ENCODE measurements at regions of chr19 and their contacts with region 1.

Region 1: DNA sequence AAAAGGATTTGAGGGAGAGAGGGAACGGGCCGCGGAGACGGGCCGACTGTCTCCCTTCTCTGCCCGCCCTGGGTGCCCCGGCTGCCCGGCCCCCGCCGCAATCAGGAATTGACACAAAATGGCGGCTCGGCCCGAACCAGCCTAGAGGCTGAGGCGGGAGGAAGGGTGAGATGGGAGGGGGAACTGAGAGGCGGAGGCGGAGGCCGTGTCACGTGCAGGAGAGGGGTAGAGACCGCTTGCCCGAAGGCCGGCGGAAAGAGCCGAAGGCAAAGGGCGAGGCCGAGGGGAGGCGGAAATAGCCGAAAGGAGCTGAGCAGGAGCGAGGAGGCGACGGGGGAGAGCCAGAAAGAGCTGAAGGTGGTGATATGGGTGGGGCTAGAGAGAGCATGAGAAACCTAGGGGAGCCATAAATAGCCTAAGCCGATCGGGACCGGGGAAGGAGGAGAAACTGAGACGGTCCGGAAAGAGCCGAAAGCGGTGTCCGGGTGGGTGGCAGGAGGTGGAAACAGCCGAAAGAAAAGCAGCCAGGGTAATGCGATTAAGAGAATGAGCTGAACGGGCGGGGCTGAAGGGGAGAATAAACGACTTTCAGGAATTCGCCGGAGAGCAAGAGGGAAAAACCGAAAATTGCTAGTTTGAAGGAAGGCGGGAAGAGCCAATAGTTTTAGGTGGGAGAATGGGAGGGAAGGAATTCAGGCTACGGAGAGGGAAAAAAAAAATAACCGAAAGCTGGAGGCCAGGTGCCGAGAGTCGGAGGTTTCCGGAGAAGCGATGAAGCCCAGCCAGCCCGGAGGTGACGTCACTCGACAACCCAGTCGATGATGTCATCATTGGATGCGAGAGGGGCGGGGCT is at the start of gene ZC3H4:
- DNase-seq: peak; percentile 100
- H3K4me3 Mint-ChIP-seq: peak within 1 kb of the TSS; percentile 94
- H3K27ac Mint-ChIP-seq: peak within 1 kb of the TSS; percentile 100
- H3K4me1 Mint-ChIP-seq: peaks cover 33% of the 10 kb centered on the region
- H3K27me3 Mint-ChIP-seq: peaks cover 9% of the 10 kb centered on the region

Region 2: DNA sequence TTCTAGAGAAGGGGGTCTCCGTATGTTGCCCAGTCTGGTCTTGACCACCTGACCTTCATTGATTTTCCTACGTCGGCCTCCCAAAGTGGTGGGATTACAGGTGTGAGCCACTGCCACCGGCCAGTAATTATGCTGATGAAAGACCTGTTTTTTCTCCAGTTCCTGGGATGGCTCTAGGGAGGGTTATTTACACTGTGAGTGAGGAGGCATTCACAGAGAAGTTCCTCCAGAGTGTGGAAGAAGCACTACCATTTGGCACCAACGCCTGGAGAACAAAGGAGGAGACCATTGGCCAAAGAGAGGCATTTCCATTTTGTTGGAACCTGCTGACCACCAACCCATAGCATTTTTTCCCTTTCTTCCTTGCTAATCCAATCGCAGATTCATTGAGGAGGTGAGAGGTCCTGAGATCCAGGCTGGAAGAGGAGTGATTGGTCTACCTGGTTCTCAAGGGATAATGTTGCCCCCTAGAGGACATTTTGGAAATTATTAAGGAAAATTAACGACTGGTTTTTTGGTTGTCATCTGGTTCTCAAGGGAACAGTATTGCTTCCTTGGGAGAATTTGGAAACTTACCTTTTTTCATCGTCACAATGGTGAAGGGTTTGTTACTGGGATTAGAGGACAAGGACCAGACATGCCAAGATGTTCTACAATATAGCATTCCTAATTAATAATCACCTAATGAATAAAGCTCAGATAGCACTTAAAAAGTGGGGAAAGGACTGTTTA is 11.9 kb after region 1 on chr19:
- CTCF ChIA-PET with region 1: interaction called, 17 read pairs
- DNase-seq: no peak
- H3K4me3 Mint-ChIP-seq: no peak overlapping the region
- H3K27ac Mint-ChIP-seq: no peak overlapping the region
- H3K4me1 Mint-ChIP-seq: peaks cover 7% of the 10 kb centered on the region
- H3K27me3 Mint-ChIP-seq: peaks cover 10% of the 10 kb centered on the region

Region 3: DNA sequence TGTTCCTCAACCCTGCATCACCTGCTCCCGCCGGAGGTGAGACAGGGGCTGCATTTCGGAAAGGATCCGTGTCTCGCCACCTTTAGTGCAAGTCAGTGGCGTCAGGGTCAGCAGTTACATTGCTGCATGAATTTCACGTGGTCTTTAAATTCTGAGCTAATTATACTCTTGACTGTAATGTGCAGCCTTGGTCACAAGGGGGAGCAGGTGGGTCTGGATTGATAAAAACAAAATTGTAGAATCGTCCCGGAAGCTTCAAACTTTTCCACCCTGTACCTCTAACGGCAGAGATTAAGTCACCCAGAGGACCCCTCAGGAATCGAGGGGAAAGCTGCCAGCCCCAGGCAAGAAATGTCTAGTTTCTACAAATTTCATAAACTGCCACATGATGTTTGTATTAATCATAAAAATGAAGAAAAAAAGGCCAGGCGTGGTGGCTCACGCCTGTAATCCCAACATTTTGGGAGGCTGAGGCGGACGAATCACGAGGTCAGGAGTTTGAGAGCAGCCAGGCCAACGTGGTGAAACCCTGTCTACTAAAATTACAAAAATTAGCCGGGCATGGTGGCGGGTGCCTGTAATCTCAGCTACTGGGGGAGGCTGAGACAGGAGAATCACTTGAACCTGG is 97.6 kb after region 1 on chr19:
- CTCF ChIA-PET with region 1: no interaction called
- DNase-seq: peak; percentile 88
- H3K4me3 Mint-ChIP-seq: no peak overlapping the region
- H3K27ac Mint-ChIP-seq: peak overlapping the region; percentile 86
- H3K4me1 Mint-ChIP-seq: peaks cover 19% of the 10 kb centered on the region
- H3K27me3 Mint-ChIP-seq: no peaks in the 10 kb centered on the region